Caco-2 (cell line): ENCODE measurements at regions of chr3 and their contacts with region 1.

Region 1: DNA sequence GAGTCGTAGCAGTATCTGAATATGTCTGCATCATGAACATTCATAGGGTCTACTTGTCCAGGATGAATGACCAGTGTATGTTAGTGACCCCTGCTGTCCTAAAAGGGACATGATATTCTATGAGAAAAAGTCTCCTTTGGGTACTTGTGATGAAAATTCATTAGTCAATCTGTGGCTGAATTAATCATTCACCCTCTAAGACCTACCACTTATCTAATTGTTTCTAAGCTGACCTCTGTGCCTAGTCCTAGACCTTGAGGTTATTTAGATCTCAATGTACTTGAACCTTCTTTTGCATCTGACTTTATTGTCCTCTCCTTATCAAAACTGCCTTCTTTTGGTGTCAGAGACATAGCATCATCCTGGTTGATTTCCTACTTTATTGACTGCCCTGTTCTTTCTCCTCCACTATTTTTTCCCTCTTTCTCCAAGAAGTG is 799.3 kb downstream of the DIPK2A start:
- DNase-seq: peak in 1 of 2 experiments; percentile 41
- H3K4me3 ChIP-seq: no peak overlapping the region
- H3K4me3 Mint-ChIP-seq: no peak overlapping the region
- H3K27ac Mint-ChIP-seq: no peak overlapping the region
- H3K4me1 ChIP-seq: no peaks in the 10 kb centered on the region
- H3K4me1 Mint-ChIP-seq: no peaks in the 10 kb centered on the region
- H3K27me3 ChIP-seq: no peaks in the 10 kb centered on the region
- H3K27me3 Mint-ChIP-seq: peaks cover 4% of the 10 kb centered on the region
- CTCF ChIP-seq: peak; percentile 55 to 61

Region 2: DNA sequence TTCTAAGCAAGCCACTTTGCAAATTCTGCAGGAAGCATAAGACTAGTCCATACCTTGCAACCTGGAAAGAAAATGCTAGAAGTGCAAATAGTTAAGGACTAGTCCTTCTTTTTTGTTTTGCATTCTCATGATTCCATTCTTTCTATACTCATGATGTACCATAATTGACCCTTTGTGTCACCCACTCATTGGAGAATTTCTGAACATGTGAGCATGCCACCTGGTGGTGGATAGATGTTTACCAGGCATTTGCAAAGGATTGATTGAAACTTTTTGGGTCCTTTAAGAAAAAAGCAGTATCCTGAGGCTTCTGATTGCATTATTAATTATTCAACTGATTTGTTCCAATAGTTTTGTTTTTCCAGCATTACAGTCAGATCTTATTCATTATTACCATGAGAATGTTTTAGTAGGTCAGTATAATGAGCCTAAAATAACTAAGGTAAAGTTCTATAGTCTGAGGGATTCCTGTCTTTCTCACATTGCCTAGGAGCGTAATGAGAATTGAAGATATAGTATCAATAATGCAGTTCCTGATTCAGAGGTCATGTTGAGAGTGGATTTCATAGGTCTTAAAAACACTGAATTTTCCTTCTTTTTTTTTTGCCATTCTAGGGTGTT is 819.5 kb before region 1 on chr3:
- CTCF ChIA-PET with region 1: no interaction called
- POLR2A ChIA-PET with region 1: no interaction called
- intact Hi-C with region 1: loop called (anchors 1 kb)
- DNase-seq: peak; percentile 36 to 47
- H3K4me3 ChIP-seq: no peak overlapping the region
- H3K4me3 Mint-ChIP-seq: no peak overlapping the region
- H3K27ac Mint-ChIP-seq: no peak overlapping the region
- H3K4me1 ChIP-seq: no peaks in the 10 kb centered on the region
- H3K4me1 Mint-ChIP-seq: peaks cover 6% of the 10 kb centered on the region
- H3K27me3 ChIP-seq: no peaks in the 10 kb centered on the region
- H3K27me3 Mint-ChIP-seq: no peaks in the 10 kb centered on the region
- CTCF ChIP-seq: peak; percentile 70 to 76

Region 3: DNA sequence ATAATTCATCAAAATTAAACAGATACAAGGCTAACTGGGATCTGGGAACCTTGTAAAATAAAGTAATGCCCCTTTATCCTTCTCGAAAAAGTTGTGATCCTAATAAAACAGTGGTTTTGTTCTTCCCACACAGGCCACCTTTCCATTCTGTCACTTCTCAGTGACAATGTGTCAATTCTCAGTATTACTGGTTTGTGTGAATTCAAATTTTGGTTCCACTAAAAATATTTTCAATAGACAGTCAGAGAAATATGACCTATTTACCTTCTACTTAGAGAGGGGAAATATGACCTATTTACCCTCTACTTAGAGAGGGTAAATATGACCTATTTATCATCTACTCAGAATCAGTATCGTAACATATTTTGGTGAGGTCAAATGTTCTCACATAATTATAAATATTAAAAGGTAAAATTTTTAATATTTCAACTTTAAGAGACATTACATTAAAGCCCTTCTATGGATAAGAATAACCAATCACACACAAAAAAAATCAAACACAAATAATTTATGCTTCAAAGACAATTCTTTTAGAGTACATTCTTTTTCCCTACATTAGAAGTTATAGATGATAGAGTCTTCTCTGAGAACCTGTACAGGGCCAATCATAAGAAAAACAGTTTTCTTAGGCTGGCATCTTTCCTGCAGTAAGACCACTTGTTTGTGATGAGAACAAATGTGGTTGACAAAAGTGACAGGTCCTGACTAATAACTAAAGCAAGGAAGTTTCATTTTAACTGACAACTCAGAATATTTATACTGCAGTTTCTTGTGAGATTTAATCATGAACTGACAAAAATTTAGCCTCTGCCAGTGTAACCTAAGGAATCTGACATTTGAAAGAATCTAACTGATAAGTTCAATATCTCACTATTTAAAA is 476.0 kb before region 1 on chr3:
- CTCF ChIA-PET with region 1: no interaction called
- POLR2A ChIA-PET with region 1: no interaction called
- intact Hi-C with region 1: loop called (anchors 10 kb)
- DNase-seq: no peak
- H3K4me3 ChIP-seq: no peak overlapping the region
- H3K4me3 Mint-ChIP-seq: peak overlapping the region; percentile 50
- H3K27ac Mint-ChIP-seq: peak overlapping the region; percentile 68
- H3K4me1 ChIP-seq: peaks cover 38% of the 10 kb centered on the region
- H3K4me1 Mint-ChIP-seq: peaks cover 21% of the 10 kb centered on the region
- H3K27me3 ChIP-seq: no peaks in the 10 kb centered on the region
- H3K27me3 Mint-ChIP-seq: no peaks in the 10 kb centered on the region
- CTCF ChIP-seq: no peak

Region 4: GRCh38 chr3:144529566-144529965 is 241.4 kb before region 1 on chr3:
- CTCF ChIA-PET with region 1: no interaction called
- POLR2A ChIA-PET with region 1: no interaction called
- intact Hi-C with region 1: loop called (anchors 10 kb)
- DNase-seq: no peak
- H3K4me3 ChIP-seq: no peak overlapping the region
- H3K4me3 Mint-ChIP-seq: no peak overlapping the region
- H3K27ac Mint-ChIP-seq: no peak overlapping the region
- H3K4me1 ChIP-seq: 0 out of 2 replicates have a peak, but pooled peaks cover 8% of the 10 kb centered on the region
- H3K4me1 Mint-ChIP-seq: peaks cover 14% of the 10 kb centered on the region
- H3K27me3 ChIP-seq: no peaks in the 10 kb centered on the region
- H3K27me3 Mint-ChIP-seq: no peaks in the 10 kb centered on the region
- CTCF ChIP-seq: no peak

Region 5: DNA sequence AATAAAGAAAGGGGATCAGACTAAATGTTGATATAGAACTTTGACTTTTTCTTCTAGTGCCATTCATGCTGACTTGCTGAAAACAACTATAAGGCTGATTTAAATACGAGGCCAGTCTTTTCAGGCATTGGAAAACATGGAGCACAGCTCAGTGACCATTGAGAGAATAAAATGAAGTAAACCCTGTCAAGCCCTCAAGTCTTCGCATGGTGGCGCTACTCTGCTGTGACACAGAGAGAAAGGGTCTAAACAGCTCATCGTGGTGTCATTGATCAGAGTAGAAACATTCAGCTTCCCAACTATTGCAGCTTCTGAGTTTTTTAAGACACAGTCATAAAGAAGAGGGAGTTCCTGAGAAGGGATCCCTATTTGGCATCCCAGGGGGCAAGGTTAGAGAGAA is 83.1 kb before region 1 on chr3:
- CTCF ChIA-PET with region 1: no interaction called
- POLR2A ChIA-PET with region 1: no interaction called
- intact Hi-C with region 1: loop called (anchors 1 kb)
- DNase-seq: peak; percentile 26 to 35
- H3K4me3 ChIP-seq: no peak overlapping the region
- H3K4me3 Mint-ChIP-seq: no peak overlapping the region
- H3K27ac Mint-ChIP-seq: no peak overlapping the region
- H3K4me1 ChIP-seq: no peaks in the 10 kb centered on the region
- H3K4me1 Mint-ChIP-seq: no peaks in the 10 kb centered on the region
- H3K27me3 ChIP-seq: no peaks in the 10 kb centered on the region
- H3K27me3 Mint-ChIP-seq: no peaks in the 10 kb centered on the region
- CTCF ChIP-seq: peak in 1 of 2 experiments; percentile 50